ENCODE measurements at regions of chr4 and their contacts with region 1.

Region 1: DNA sequence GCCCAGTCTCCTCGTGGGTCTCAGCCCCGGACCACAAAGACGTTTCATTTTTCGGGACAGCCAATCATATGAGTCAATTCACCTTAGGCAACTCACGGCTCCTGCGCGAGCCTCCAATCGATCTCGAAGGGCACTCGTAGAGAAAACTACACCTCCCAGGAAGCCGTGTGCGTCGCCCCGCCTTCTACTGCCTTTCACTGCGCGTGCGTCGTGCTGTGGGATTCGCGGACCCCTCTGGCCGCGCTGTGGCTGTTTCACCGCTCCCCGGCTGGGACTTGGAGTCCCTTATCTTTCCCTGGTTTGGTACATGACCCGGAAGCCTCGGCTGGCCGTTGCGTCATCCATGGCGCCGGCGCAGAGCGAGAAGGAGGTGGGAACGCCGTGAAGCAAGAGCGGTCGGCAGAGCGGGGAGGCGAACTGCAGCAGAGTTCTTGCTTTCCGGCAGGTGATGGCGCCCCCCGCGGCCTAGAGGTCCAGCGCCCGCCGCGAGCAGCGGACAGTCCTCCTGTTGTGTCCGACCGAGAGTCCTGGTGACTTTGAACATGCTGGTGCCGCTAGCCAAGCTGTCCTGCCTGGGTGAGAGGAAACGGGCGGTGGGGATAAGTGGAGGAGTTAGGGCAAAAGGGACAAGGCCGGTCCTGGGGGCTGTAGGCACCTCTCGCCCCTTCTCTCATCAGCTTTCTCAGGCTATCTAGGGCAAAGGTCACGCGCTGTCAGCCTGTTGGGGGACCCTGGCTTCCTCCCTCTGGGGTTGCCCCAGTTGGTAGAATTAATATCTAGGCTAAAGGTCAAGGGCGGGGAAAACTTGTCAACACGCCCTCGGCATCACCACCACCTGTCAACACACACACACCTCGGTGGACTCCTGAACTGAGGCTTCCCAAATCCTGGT is at the start of gene ETFDH:
- DNase-seq: peak; percentile 99
- ATAC-seq: peak; percentile 96
- total RNA-seq, gene ETFDH: 383 TPM

Region 2: GRCh38 chr4:158624889-158625478 is 47.2 kb before region 1 on chr4:
- intact Hi-C with region 1: loop called (anchors 2 kb)
- DNase-seq: no peak
- ATAC-seq: peak; percentile 59

Region 3: GRCh38 chr4:158722917-158723793 is 51.0 kb after region 1 on chr4 and contains the start of gene PPID:
- intact Hi-C with region 1: loop called (anchors 5 kb)
- DNase-seq: peak; percentile 92
- ATAC-seq: peak; percentile 96
- total RNA-seq, gene PPID: 33.4 TPM

Region 4: DNA sequence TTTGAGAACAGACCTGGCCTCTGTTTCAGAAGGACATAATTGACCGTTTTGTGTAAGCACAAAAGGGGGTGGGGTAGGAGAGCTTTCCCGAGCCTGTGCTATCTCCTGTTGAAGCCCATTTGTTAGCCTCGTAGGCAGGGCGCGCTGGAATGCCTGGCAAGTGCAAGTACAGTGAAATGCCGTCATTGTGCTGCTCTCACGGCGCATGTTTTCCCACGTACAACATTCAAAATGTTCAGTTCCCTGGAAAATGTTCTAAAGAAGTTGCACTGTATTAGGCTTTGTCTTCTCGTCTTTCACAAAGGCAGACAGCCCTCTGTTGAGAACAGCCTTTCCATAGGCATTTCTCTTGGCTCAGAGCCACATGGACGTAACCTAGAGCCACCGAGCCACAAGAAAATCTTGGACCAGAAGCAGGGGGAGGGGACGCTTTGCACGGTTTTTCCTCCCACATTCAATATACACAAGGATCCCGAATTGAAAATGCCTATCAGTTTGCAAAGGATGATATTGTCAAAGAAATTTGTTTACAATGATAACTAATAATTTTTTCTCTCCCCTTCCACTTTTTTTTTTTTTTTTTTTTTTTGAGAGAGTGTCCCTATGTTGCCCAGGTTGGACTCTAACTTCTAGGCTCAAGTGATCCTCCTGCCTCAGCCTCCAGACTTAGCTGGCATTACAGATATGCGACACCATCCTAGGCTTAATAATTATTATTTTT is 376.2 kb after region 1 on chr4:
- intact Hi-C with region 1: no loop called
- DNase-seq: peak; percentile 78
- ATAC-seq: peak; percentile 92